HepG2 (cell line): ENCODE measurements at regions of chr6 and their contacts with region 1.

Region 1: GRCh38 chr6:142331075-142331551 is 29.3 kb downstream of the ADGRG6 start:
- DNase-seq: peak; percentile 100
- ATAC-seq: peak; percentile 97
- H3K4me3 ChIP-seq: peak overlapping the region; percentile 21 to 36 (median 34); a peak in 4 of 6 replicates
- H3K27ac ChIP-seq: peak overlapping the region; percentile 80
- H3K4me1 ChIP-seq: peaks cover 98% of the 10 kb centered on the region
- H3K27me3 ChIP-seq: no peaks in the 10 kb centered on the region
- CTCF ChIP-seq: no peak
- EP300 ChIP-seq: peak; percentile 46 to 99; a peak in 3 of 4 replicates
- POLR2A ChIP-seq: no peak
- RAD21 ChIP-seq: peak; percentile 27; the same call in 1 of the 2 replicates

Region 2: DNA sequence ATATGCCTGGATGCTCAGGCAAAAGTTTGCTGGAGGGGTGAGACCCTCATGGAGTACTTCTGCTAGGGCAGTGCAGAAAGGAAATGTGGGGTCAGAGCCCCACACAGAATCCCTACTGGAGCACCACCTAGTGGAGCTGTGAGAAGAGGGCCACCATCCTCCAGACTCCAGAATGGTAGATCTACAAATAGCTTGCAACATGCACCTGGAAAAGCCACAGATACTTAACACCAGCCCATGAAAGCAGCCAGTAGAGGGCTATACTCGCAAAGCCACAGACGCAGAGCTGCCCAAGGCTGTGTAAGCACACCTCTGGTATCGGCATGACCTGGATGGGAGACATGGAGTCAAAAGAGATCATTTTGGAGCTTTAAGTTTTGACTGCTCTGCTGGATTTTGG is 259.1 kb before region 1 on chr6:
- CTCF ChIA-PET with region 1: no interaction called
- POLR2A ChIA-PET with region 1: no interaction called
- in situ Hi-C with region 1: no loop called
- intact Hi-C with region 1: no loop called
- DNase-seq: peak; percentile 73
- ATAC-seq: peak; percentile 100
- H3K4me3 ChIP-seq: no peak overlapping the region
- H3K27ac ChIP-seq: no peak overlapping the region
- H3K4me1 ChIP-seq: 0 out of 2 replicates have a peak, but pooled peaks cover 7% of the 10 kb centered on the region
- H3K27me3 ChIP-seq: no peaks in the 10 kb centered on the region
- CTCF ChIP-seq: peak; percentile 67
- EP300 ChIP-seq: no peak
- POLR2A ChIP-seq: no peak
- RAD21 ChIP-seq: peak; percentile 53; the same call in 1 of the 2 replicates

Region 3: GRCh38 chr6:142316791-142317368 is 14.2 kb before region 1 on chr6:
- CTCF ChIA-PET with region 1: no interaction called
- POLR2A ChIA-PET with region 1: interaction called, 3 read pairs
- in situ Hi-C with region 1: no loop called
- intact Hi-C with region 1: loop called (anchors 2 kb)
- DNase-seq: no peak
- ATAC-seq: peak; percentile 58
- H3K4me3 ChIP-seq: no peak overlapping the region
- H3K27ac ChIP-seq: peak overlapping the region; percentile 17
- H3K4me1 ChIP-seq: peaks cover 69% of the 10 kb centered on the region
- H3K27me3 ChIP-seq: no peaks in the 10 kb centered on the region
- CTCF ChIP-seq: no peak
- EP300 ChIP-seq: 0 out of 4 replicates have a peak, but pooled peaks of 1 of the 2 experiments have one; percentile 17
- POLR2A ChIP-seq: no peak
- RAD21 ChIP-seq: no peak

Region 4: GRCh38 chr6:142361782-142362750 is 31.0 kb after region 1 on chr6:
- CTCF ChIA-PET with region 1: no interaction called
- POLR2A ChIA-PET with region 1: no interaction called
- in situ Hi-C with region 1: no loop called
- intact Hi-C with region 1: no loop called
- DNase-seq: peak; percentile 94
- ATAC-seq: peak; percentile 88
- H3K4me3 ChIP-seq: no peak overlapping the region
- H3K27ac ChIP-seq: peak overlapping the region; percentile 13
- H3K4me1 ChIP-seq: peaks cover 53% of the 10 kb centered on the region
- H3K27me3 ChIP-seq: no peaks in the 10 kb centered on the region
- CTCF ChIP-seq: no peak
- EP300 ChIP-seq: peak in 1 of 2 experiments; percentile 51; a peak in 1 of 4 replicates
- POLR2A ChIP-seq: no peak
- RAD21 ChIP-seq: no peak

Region 5: DNA sequence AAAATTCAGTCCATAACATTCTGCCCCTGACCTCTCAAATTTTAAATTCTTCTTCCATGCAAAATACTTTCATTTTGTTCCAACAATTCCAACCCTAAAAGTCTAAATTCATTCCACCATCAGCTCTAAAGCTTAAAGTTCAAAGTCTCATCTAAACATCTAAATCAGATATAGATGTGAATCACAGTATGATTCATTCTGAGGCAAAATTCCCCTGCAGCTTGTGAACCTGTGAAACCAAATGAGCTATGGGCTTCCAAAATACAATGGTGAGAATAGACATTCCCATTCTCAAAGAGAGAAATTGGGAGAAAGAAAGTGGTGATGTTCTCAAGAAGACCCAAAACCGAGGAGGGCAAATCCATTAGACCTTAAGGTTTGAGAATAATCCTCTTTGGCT is 304.0 kb after region 1 on chr6:
- CTCF ChIA-PET with region 1: no interaction called
- POLR2A ChIA-PET with region 1: no interaction called
- in situ Hi-C with region 1: no loop called
- intact Hi-C with region 1: no loop called
- DNase-seq: no peak
- ATAC-seq: no peak
- H3K4me3 ChIP-seq: no peak overlapping the region
- H3K27ac ChIP-seq: no peak overlapping the region
- H3K4me1 ChIP-seq: peaks cover 12% of the 10 kb centered on the region
- H3K27me3 ChIP-seq: no peaks in the 10 kb centered on the region; a peak in 1 of 5 replicates
- CTCF ChIP-seq: no peak
- EP300 ChIP-seq: no peak
- POLR2A ChIP-seq: no peak
- RAD21 ChIP-seq: no peak